ENCODE measurements at regions of chr6 and their contacts with region 1.

Region 1: DNA sequence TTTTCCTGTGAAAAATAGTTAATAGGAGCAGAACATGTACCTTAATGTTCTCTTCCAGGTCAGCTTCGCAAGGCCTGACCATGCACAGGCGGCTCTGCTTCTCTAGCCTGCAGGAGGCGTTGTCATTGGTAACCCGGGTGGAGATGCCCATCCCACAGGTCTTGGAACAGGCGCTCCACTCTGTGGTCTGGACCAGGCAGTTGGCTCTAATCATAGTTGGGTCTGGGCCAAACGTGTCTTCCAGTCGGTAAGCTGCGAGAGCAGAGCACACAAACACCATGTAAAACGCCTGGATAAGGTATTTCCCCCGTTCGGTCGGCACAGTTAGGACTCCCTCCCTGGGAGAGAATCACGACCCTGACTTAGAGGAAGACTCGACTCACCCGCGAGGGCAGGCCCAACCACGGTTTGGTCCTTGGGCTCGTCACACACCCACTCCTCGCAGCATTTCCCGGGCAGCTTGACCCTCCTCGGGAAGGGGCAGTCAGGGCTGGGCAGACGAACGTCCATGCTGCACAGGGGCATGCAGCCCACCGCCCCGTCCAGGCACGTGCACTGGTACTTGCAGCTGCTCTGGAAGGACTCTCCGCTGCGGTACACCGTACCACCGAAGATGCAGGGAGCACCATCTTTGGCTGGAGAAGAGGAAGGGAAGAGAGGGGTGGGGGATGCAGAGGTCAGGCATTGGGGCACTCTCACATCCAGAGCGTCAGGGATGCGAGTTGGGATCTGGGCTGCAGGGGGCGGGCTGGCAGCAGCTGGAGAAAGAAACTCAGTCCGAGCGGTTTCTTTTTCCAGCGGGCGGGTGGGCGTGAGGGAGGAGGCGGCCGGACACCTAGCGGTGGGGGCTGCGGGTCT is 1.0 kb downstream of the CCN2 start:
- DNase-seq: no peak
- H3K4me3 ChIP-seq: no peak overlapping the region
- H3K27ac ChIP-seq: no peak overlapping the region
- H3K4me1 ChIP-seq: peaks cover 31% of the 10 kb centered on the region
- H3K27me3 ChIP-seq: no peaks in the 10 kb centered on the region
- CTCF ChIP-seq: no peak

Region 2: DNA sequence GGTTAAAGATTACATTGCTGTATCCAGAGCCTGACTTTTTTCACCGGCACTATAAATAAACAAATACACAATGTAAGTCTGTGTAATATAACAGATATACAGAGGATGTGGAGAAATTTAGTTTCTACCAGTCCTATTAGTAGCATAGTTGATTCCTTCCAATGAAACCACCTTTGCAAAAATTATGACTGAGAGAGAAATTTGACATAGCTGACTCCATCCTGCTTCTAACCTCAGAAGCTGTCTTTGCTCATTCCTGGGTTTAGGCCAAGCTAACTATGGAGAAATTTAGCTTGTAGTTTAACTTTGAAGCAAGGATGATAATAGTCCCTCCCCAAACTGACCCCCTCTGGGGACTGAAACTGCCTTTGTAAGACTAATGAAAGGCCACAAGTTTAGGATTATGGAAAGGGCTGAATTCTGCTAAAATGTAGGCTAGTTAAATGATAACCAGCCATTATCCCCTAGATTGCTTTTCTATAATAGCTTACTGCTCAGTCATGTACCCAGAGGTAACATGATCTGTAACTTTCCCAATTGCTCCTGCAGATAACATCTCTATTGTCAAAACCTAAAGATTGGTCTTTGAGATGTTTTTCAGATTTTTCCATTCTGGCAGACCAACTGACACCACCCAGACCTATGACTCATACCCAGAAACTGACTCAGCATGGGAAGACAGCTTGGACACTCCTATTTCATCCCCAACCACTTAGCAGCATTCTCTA is 549.9 kb before region 1 on chr6:
- CTCF ChIA-PET with region 1: no interaction called
- POLR2A ChIA-PET with region 1: interaction called, 11 read pairs
- intact Hi-C with region 1: no loop called
- DNase-seq: peak; percentile 56 to 59
- H3K4me3 ChIP-seq: no peak overlapping the region
- H3K27ac ChIP-seq: no peak overlapping the region
- H3K4me1 ChIP-seq: peaks cover 6% of the 10 kb centered on the region
- H3K27me3 ChIP-seq: no peaks in the 10 kb centered on the region
- CTCF ChIP-seq: no peak

Region 3: GRCh38 chr6:131765081-131765803 is 184.9 kb before region 1 on chr6:
- CTCF ChIA-PET with region 1: no interaction called
- POLR2A ChIA-PET with region 1: no interaction called
- intact Hi-C with region 1: no loop called
- DNase-seq: no peak
- H3K4me3 ChIP-seq: no peak overlapping the region
- H3K27ac ChIP-seq: no peak overlapping the region
- H3K4me1 ChIP-seq: no peaks in the 10 kb centered on the region
- H3K27me3 ChIP-seq: no peaks in the 10 kb centered on the region
- CTCF ChIP-seq: no peak

Region 4: DNA sequence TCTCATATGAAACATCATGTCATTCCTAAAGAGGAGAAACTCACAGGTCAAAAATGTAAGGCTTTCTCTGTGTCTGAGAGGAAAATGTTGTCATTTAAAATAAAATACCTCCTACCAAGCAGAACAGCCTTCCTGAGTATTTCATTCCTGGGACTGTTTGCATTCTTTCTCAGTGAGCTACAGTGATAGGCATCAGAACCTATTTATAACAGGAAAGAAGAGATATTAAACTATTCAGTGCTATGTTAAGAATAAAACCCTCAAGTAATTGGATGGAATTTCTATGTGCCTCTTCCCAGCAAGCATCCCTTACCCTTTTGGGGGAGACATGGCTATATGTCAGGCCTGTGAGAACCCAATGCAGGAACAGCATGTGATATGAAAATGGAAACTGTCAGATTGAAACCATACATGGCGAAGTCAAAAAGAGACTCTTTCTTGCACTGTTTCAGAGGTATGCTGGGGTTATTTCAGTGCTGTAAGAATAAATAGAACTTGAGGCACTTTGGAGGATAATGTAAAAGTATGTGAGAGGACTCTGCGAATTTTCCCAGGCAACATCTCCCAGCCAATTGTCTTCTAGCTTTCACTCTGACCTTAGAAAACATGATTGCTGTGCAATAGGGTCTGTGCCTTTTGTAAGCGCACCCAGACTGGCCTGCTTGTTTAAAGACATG is 134.8 kb after region 1 on chr6:
- CTCF ChIA-PET with region 1: interaction called, 7 read pairs
- POLR2A ChIA-PET with region 1: interaction called, 23 read pairs
- intact Hi-C with region 1: loop called (anchors 2 kb)
- DNase-seq: peak; percentile 22 to 57
- H3K4me3 ChIP-seq: no peak overlapping the region
- H3K27ac ChIP-seq: peak overlapping the region; percentile 70
- H3K4me1 ChIP-seq: 0 out of 2 replicates have a peak, but pooled peaks cover 10% of the 10 kb centered on the region
- H3K27me3 ChIP-seq: no peaks in the 10 kb centered on the region
- CTCF ChIP-seq: no peak

Region 5: GRCh38 chr6:132132924-132133639 is 182.9 kb after region 1 on chr6:
- CTCF ChIA-PET with region 1: no interaction called
- POLR2A ChIA-PET with region 1: no interaction called
- intact Hi-C with region 1: no loop called
- DNase-seq: no peak
- H3K4me3 ChIP-seq: no peak overlapping the region
- H3K27ac ChIP-seq: no peak overlapping the region
- H3K4me1 ChIP-seq: 0 out of 2 replicates have a peak, but pooled peaks cover 11% of the 10 kb centered on the region
- H3K27me3 ChIP-seq: no peaks in the 10 kb centered on the region
- CTCF ChIP-seq: no peak

Region 6: GRCh38 chr6:132512638-132513632 is 562.8 kb after region 1 on chr6 and contains the start of gene STX7:
- CTCF ChIA-PET with region 1: no interaction called
- POLR2A ChIA-PET with region 1: interaction called, 8 read pairs
- intact Hi-C with region 1: loop called (anchors 2 kb)
- DNase-seq: peak; percentile 90 to 97
- H3K4me3 ChIP-seq: peak within 1 kb of the TSS; percentile 71
- H3K27ac ChIP-seq: peak within 1 kb of the TSS; percentile 63
- H3K4me1 ChIP-seq: peaks cover 28% of the 10 kb centered on the region
- H3K27me3 ChIP-seq: no peaks in the 10 kb centered on the region
- CTCF ChIP-seq: no peak
- total RNA-seq, gene STX7: 33.3 and 40.7 TPM in 2 replicates

Region 7: DNA sequence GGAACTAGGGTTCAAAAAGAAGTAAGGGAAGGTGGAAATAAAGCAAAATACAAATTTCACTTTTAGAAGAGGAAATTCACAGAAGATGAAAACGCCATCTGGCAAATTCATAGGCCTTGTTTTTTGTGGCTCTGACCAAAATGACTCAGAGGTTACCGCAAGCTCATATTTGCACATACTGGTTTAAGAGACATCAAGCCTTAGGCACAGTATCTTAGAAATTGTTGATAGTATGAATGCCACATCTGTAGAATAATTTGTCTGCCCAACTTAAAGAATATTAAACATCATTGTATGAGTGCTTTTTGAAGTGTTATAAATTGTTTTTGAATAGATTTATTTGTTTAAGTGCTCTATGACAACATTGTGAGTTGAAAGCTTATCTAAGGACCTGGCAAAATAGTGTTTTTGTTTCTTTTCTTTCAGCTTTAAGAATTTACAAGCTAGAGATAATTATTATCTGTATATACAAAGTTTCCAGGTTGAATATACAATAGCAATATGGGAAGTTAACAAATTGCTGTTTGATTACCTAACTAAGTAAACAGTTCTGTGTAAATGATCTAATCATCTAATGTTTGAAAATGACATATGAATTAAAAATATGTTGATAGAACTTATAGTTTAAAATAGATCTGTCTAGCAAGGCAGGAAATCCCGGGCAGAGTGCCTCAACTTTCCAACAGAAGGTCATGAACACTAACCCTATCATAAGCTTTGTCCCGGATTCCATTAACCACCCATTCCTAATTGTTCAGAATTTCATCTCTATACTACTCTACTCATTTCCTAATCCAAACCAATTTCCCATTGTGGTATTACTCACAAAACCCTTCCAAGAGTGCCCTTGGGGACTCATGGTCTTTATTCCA is 698.5 kb after region 1 on chr6:
- CTCF ChIA-PET with region 1: no interaction called
- POLR2A ChIA-PET with region 1: no interaction called
- intact Hi-C with region 1: no loop called
- DNase-seq: peak in 1 of 2 experiments; percentile 65
- H3K4me3 ChIP-seq: no peak overlapping the region
- H3K27ac ChIP-seq: peak overlapping the region; percentile 48
- H3K4me1 ChIP-seq: peaks cover 26% of the 10 kb centered on the region
- H3K27me3 ChIP-seq: no peaks in the 10 kb centered on the region
- CTCF ChIP-seq: no peak

Region 8: DNA sequence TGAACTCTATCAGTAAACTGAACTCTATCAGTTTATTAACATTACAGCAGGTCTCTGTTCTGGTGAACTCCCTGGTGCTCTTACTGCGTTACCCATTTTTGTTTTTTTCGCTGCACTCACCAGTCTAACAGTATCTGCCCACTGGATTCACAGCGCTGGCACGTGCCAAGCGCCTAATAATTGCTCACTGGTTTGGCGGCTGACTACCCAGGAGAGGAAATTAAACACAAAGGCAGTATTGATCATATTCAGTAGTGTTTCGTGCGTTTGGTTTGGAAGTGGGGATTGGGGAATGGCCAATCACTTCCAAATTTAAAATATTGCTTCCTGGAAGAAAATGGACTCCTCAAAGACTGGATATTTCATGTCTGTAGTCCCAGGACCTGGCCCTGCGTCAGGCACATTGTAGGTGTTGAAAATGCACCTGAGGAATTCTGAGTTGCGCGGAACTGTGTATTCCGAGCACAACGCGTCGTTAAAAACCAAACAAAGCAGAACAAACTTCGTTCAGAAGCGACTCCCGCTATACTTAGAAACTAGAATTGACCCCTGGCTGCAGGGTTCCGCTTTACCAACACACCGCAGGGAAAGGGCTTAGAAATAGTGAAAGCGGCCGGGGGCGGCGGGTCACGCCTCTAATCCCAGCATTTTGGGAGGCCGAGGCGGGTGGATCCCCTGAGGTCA is 863.2 kb after region 1 on chr6:
- CTCF ChIA-PET with region 1: no interaction called
- POLR2A ChIA-PET with region 1: no interaction called
- intact Hi-C with region 1: loop called (anchors 5 kb)
- DNase-seq: peak in 1 of 2 experiments; percentile 59
- H3K4me3 ChIP-seq: peak overlapping the region; percentile 84
- H3K27ac ChIP-seq: peak overlapping the region; percentile 89
- H3K4me1 ChIP-seq: peaks cover 36% of the 10 kb centered on the region
- H3K27me3 ChIP-seq: no peaks in the 10 kb centered on the region
- CTCF ChIP-seq: no peak

Region 9: DNA sequence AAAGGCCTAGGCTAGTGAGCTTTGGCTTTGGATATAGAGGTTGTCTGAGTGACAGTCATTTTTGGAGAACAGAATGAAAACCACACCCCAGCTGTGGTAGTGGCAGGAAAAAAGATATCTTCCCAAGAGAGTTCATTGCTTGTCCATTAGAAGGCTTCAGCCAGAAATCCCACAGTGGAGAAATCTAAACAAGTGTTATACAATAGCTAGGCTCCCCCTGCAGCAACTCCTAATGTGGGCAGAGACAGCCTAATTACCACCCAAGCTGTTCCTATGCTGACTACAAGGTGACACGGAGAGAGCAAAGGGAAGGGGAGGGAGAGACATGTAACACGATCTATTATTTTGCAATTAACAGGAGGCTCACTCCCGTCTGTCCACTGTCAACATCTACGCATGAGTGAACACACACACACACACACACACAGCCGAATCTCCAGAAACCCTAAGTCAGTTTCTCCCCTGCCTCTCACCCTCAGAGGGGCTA is 1791.3 kb after region 1 on chr6:
- CTCF ChIA-PET with region 1: no interaction called
- POLR2A ChIA-PET with region 1: interaction called, 13 read pairs
- intact Hi-C with region 1: loop called (anchors 10 kb)
- DNase-seq: peak; percentile 29 to 89
- H3K4me3 ChIP-seq: no peak overlapping the region; the same call in 1 of the 2 replicates
- H3K27ac ChIP-seq: peak overlapping the region; percentile 63
- H3K4me1 ChIP-seq: peaks cover 41% of the 10 kb centered on the region
- H3K27me3 ChIP-seq: no peaks in the 10 kb centered on the region
- CTCF ChIP-seq: no peak; the same call in 1 of the 2 replicates

Measured in PC-9 (cell line).